Posterior vena cava (tissue), 2 donors: ENCODE measurements at regions of chr9 and their contacts with region 1.

Region 1: DNA sequence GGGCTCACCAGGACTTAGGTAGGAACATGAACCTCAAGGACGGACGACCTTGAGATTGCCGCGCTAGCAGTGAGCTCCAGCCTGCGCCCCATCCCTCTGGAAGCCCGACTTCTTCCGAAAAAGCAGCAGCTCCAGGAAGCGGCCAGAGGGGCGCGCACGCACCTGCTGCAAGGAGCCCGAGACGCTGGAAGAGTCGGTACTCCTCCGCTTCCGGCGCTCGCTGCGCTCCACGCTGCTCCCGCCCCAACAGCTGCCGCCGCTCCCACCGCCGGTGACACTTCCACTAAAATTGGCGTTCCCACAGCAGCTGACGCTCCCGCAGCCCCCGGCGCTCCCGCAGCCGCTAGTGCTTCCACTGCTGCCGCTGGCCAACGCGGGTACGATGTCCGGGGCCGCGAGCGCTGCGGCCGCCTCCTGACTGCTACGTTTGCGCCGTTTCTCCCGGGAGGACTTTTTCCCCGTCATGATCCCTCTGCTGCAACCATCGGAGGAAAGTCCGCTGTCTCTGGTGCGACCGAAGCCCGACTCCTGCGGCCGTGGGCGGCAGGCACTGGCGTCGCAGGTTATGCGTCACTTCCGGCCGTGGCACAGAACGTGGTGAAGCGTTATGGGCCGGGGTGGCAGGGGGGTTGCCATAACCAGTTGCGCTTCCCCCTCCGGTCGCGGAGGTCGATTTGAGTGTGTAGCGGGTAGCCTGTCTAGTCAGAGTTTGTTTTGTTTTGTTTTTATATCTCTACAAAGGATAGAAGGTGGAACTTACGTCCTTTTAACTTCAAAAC is at the start of gene CAAP1:
- DNase-seq: peak; percentile 98
- total RNA-seq, gene CAAP1: 10.3 to 12.2 TPM

Region 2: DNA sequence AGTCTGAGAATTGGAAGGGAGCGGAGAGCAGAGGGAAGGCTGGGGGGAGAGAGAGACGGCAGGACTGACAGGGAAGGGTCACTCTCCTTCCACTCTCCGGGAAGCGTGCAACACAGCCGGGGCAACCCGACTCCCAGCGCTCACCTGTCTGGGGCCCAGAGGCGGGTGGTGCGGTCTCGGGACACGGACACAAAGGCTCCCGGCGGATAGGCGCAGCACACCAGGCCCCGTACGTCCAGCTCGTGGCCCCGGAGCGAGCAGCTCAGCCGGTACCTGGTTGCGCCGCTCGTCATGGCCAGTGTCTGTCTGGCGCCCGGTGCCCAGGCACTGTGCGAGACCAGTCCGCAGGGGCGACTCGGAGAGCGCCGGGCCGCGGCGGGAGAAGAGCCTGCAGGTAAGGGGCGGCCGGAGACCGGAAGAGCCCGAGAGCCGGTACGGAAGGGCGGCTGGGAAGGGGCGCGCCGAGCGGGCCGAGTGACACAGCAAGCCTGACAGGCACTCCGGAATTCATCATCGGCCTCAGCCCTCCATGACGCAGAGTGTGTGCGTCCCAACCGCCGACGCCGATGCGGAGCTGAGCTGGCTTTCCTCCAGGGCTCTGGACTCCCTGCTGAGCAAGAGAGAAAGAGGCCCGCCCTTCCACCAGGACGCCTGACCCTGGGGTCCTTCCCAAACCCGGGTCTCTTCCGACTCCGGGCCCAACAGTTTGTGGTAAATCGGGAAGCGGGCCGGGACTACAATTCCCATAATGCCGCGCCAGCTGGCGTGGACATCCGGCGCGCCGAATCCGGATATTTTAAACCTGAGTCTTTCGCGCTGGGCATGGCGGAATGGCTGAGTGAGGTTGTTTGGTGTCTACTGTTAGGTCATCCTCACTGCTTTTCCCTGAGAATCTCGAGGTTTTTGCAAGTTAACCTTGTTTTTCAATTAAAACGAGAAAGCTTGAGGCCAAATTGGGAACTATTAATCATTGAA is 54.6 kb after region 1 on chr9 and contains the start of gene PLAA:
- intact Hi-C with region 1: loop called in 1 of 2 experiments (anchors 5 kb)
- DNase-seq: peak; percentile 97
- total RNA-seq, gene PLAA: 25.4 to 27.0 TPM